ENCODE measurements at regions of chr20 and their contacts with region 1.

Region 1: GRCh38 chr20:63537525-63538203 is 488 bp upstream of the PTK6 start:
- DNase-seq: peak; percentile 98
- ATAC-seq: peak; percentile 97
- H3K4me3 Mint-ChIP-seq: peak overlapping the region; percentile 68
- H3K27ac Mint-ChIP-seq: peak overlapping the region; percentile 85
- H3K4me1 Mint-ChIP-seq: peaks cover 8% of the 10 kb centered on the region
- H3K27me3 Mint-ChIP-seq: no peaks in the 10 kb centered on the region

Region 2: DNA sequence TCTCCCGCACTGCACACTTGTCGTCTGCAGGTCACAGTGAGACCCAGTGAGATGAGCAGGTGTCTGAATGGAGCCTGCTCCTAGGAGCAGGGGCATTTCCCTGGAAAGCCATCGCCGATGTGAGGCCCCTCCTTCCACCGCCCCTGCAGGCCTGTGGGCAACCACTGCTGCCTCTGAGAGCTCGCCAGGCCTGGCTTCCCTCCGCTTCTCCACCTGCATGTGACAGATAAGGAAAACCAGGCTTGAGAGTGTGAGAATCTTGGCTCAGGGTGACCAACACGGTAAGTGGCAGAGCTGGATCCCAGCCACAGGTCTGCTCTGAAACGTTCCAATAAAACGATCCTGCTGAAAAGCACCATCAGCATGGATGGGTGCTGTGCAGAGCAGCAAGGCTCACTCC is 1952.8 kb before region 1 on chr20:
- CTCF ChIA-PET with region 1: no interaction called
- POLR2A ChIA-PET with region 1: no interaction called
- intact Hi-C with region 1: no loop called
- DNase-seq: no peak
- ATAC-seq: no peak
- H3K4me3 Mint-ChIP-seq: no peak overlapping the region
- H3K27ac Mint-ChIP-seq: no peak overlapping the region
- H3K4me1 Mint-ChIP-seq: no peaks in the 10 kb centered on the region
- H3K27me3 Mint-ChIP-seq: peaks cover 2% of the 10 kb centered on the region

Region 3: GRCh38 chr20:63495741-63496595 is 41.7 kb before region 1 on chr20:
- CTCF ChIA-PET with region 1: interaction called, 7 read pairs
- POLR2A ChIA-PET with region 1: no interaction called
- intact Hi-C with region 1: loop called in 1 of 2 experiments (anchors 1 kb)
- DNase-seq: peak; percentile 88
- ATAC-seq: peak; percentile 80
- H3K4me3 Mint-ChIP-seq: peak overlapping the region; percentile 43
- H3K27ac Mint-ChIP-seq: no peak overlapping the region
- H3K4me1 Mint-ChIP-seq: peaks cover 2% of the 10 kb centered on the region
- H3K27me3 Mint-ChIP-seq: peaks cover 14% of the 10 kb centered on the region

Region 4: GRCh38 chr20:63627129-63627750 is 89.6 kb after region 1 on chr20:
- CTCF ChIA-PET with region 1: interaction called, 3 read pairs
- POLR2A ChIA-PET with region 1: no interaction called
- intact Hi-C with region 1: loop called in 1 of 2 experiments (anchors 1 kb)
- DNase-seq: peak; percentile 97
- ATAC-seq: peak; percentile 77
- H3K4me3 Mint-ChIP-seq: peak overlapping the region; percentile 87
- H3K27ac Mint-ChIP-seq: peak overlapping the region; percentile 97
- H3K4me1 Mint-ChIP-seq: peaks cover 39% of the 10 kb centered on the region
- H3K27me3 Mint-ChIP-seq: no peaks in the 10 kb centered on the region

Region 5: GRCh38 chr20:63698739-63699465 is 161.2 kb after region 1 on chr20:
- CTCF ChIA-PET with region 1: no interaction called
- POLR2A ChIA-PET with region 1: no interaction called
- intact Hi-C with region 1: loop called in 1 of 2 experiments (anchors 2 kb)
- DNase-seq: peak; percentile 85
- ATAC-seq: peak; percentile 78
- H3K4me3 Mint-ChIP-seq: no peak overlapping the region
- H3K27ac Mint-ChIP-seq: peak overlapping the region; percentile 82
- H3K4me1 Mint-ChIP-seq: peaks cover 26% of the 10 kb centered on the region
- H3K27me3 Mint-ChIP-seq: no peaks in the 10 kb centered on the region

Region 6: DNA sequence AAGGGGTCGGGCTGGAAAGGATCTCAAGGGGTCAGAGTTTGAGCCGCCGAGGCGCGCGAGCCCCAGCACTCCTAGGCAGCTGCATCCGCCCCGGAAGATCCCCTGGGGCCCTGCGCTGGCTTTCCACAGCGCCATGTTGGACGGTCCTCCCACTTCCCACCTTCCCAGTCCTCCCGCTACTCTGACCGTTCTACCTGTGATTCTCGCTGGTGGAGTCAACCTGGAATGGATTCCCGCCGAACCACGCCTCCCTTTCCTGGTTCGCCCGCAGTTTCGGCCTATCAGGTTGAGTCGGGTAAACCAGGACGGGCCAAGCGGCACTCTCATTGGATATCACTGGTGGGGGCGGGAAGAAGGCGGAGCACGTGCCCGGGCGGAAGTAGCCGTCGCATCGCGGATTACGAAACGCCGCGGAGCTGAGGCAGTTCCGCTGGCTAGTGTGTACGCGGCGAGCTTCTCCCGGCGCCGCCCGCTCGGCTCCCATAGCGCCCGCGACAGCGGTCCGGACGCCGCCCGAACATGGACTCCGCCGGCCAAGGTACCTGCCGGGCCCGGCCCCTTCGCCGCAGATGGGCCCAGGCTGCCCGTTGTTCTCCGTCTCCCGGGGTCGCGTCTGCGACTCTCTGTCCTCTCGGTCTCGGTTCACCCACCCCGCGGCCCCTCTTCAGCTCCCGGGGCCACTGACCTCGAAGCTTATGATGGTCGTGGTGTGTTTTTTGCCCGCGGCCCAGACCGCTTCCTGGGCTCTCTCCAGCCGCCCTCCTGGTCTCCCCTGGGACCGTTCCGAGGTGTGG is 327.4 kb after region 1 on chr20 and contains the start of gene TPD52L2:
- CTCF ChIA-PET with region 1: interaction called, 4 read pairs
- POLR2A ChIA-PET with region 1: interaction called, 5 read pairs
- intact Hi-C with region 1: loop called (anchors 1 to 10 kb)
- DNase-seq: peak; percentile 99
- ATAC-seq: peak; percentile 86
- H3K4me3 Mint-ChIP-seq: peak within 1 kb of the TSS; percentile 79
- H3K27ac Mint-ChIP-seq: peak within 1 kb of the TSS; percentile 92
- H3K4me1 Mint-ChIP-seq: peaks cover 24% of the 10 kb centered on the region
- H3K27me3 Mint-ChIP-seq: no peaks in the 10 kb centered on the region
- total RNA-seq, gene TPD52L2: 54.0 to 56.3 TPM

Region 7: GRCh38 chr20:64038565-64039292 is 501.1 kb after region 1 on chr20:
- CTCF ChIA-PET with region 1: interaction called, 3 read pairs
- POLR2A ChIA-PET with region 1: no interaction called
- intact Hi-C with region 1: loop called in 1 of 2 experiments (anchors 1 kb)
- DNase-seq: peak; percentile 89
- ATAC-seq: peak; percentile 70
- H3K4me3 Mint-ChIP-seq: peak overlapping the region; percentile 61
- H3K27ac Mint-ChIP-seq: no peak overlapping the region
- H3K4me1 Mint-ChIP-seq: peaks cover 48% of the 10 kb centered on the region
- H3K27me3 Mint-ChIP-seq: peaks cover 2% of the 10 kb centered on the region

Region 8: DNA sequence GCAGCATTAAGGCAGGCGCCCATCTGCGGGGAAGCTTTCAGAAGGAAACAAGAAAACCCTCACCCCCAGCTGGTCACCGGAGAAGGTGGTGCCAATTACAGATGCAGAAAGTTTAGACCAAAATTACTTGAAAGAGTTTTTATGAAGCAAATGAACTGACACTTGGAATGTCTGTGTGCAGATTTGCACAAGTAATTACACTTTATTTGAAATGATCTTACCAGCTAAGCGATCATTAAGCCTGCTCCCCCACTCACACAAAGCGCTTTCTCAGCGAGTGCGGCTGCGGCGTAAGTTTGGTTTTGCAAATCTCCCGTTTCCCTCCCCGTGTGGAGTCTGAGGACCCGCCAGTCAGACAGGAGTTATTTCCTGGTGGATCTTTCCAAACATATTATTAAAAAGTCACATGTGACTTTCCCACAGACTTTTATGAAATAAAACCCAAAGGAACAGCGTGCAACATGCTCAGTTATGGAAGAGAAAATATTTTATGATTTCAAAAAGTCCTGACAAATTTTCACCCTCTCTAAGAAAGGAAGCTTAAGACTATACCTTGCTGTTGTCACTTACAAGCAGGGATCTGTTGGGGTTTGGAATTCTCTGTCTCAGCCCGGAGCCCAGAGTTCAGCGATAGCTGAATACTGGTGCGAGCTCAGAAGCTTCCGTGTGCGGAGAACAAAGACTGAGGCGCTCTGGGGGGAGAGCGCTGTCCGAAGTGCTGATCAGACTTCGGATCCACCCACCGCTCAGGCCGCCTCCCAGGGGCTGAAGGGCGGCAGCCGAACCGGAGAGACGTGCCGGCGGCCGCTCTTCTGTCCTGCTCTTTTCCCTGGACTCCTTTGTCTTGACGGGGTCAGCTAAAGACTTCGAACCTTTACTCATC is 623.9 kb after region 1 on chr20:
- CTCF ChIA-PET with region 1: no interaction called
- POLR2A ChIA-PET with region 1: no interaction called
- intact Hi-C with region 1: no loop called
- DNase-seq: peak; percentile 61
- ATAC-seq: peak; percentile 65
- H3K4me3 Mint-ChIP-seq: no peak overlapping the region
- H3K27ac Mint-ChIP-seq: no peak overlapping the region
- H3K4me1 Mint-ChIP-seq: peaks cover 1% of the 10 kb centered on the region
- H3K27me3 Mint-ChIP-seq: peaks cover 54% of the 10 kb centered on the region